Aorta (tissue), 5 donors: ENCODE measurements at regions of chr6 and their contacts with region 1.

Region 1: DNA sequence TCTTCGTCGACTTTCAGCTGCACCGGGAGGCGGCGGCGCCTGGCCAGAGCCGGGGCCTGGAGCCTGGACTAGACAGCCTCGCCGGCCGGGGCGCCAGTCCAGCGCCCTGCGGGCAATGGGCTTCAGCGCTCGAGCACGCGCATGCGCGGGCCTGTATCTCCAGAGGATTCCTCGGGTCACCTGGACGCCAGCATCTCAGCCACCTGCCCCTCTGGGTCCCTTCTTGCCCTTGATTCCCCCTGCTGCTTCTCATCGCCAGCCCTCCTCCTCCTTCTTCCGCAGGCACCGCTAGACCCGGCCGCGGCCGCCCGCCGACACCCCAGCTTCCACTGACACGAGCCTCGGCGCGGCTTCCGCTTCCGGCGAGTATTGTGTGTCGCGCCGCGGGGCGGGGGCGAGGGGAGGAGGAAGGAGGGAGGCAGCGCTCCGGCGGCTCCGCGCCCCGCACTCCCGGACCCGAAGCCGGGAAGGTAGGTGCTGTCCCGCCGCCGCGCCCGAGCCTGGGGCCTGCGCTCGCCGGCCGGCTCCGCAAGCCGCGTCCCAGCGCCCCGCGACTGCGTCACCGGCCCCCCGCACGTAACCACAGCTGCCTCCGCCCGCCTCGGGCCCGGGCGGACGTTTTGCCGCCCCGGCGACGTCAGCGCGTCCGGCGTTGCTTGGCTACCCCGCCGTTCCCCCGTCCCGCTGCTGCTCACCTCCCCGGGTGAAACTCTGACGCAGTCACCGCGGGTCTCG is at the start of gene TRIM39:
- DNase-seq: peak; percentile 94 to 96
- ATAC-seq: peak; percentile 94
- H3K4me3 ChIP-seq: peak within 1 kb of the TSS; percentile 54 to 84
- H3K27ac ChIP-seq: peak within 1 kb of the TSS; percentile 34 to 70
- H3K4me1 ChIP-seq: no peaks in the 10 kb centered on the region
- H3K27me3 ChIP-seq: no peaks in the 10 kb centered on the region
- total RNA-seq, gene TRIM39: 13.8 to 15.5 TPM

Region 2: GRCh38 chr6:30259140-30260035 is 67.3 kb before region 1 on chr6:
- intact Hi-C with region 1: loop called in 1 of 2 experiments (anchors 5 kb)
- DNase-seq: peak; percentile 80 to 90
- ATAC-seq: peak; percentile 95
- H3K4me3 ChIP-seq: peak overlapping the region; percentile 29 to 68
- H3K27ac ChIP-seq: peak overlapping the region in 1 of 2 donors; percentile 56
- H3K4me1 ChIP-seq: no peaks in the 10 kb centered on the region
- H3K27me3 ChIP-seq: no peaks in the 10 kb centered on the region

Region 3: DNA sequence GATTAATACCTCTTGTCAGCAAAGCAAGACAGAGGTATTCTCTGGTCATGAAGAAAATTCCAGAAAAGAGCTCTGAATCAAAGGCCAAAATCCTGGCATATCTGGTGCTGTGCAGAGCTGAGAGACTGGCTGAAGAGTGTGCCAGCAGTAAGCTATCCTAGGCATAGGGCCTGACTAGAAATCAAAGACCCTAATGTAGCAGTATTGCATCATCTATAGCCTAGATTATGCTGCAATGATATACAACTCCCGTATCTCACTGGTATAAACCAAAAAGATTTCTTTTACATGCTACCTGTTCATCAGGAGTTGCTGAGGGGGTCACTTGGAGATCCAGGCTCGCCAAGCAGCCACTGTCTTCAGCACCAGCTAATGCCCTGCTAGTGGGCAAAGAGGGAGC is 30.9 kb before region 1 on chr6:
- intact Hi-C with region 1: no loop called
- DNase-seq: no peak
- ATAC-seq: no peak
- H3K4me3 ChIP-seq: no peak overlapping the region
- H3K27ac ChIP-seq: no peak overlapping the region
- H3K4me1 ChIP-seq: no peaks in the 10 kb centered on the region
- H3K27me3 ChIP-seq: no peaks in the 10 kb centered on the region